ENCODE measurements at regions of chrX and their contacts with region 1.

Region 1: DNA sequence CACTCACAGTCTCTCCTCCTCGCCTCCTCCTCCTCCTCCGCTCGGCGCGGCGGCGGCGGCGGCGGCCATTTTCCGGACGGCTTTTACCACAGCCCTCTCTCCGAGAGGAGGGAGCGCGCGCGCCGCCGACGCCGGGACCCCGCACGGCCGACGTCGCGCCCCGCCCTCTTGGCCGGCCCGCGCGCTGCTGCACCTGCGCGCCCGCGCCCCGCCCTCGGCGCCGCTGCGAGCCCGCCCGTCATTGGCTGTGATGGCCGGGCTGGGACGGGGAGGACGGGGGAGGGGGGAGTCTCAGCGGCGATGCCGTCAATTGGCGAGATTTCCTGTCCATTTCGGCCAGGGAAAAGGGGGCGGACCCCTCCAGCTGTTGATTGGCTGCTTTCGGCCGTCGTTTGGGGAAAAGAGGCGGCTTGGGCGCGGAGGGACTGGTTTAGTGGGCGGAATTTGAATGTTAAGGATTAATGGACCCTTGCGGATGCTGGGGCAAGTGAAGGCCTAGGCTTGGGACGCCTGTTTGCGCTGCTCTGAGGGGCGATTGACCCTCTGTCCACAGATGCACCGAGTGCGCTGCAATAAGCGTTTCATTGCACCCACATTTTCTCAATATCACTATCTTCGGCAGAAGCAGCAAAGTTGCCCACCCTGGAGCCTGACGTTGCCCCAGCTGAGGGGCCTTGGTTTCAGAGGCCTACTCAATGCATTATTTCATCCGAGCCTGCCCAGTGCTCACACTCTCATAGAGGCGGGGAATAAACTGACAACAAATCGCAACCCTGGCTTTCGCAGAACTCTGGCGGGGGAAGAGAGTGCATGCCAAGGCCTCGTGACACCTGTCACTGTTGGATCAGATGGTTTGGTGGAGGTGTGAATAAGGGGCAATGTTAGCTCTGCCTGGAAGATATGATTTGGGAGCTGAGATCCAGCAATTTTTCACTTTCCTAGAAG is at the start of gene MECP2:
- DNase-seq: peak; percentile 93
- H3K4me3 Mint-ChIP-seq: peak within 1 kb of the TSS; percentile 98
- H3K27ac Mint-ChIP-seq: peak within 1 kb of the TSS; percentile 98
- H3K4me1 Mint-ChIP-seq: peaks cover 57% of the 10 kb centered on the region
- H3K27me3 Mint-ChIP-seq: no peaks in the 10 kb centered on the region
- total RNA-seq, gene MECP2: 50.8 to 51.0 TPM

Region 2: GRCh38 chrX:154056770-154057241 is 41.1 kb before region 1 on chrX:
- CTCF ChIA-PET with region 1: interaction called, 4 read pairs
- POLR2A ChIA-PET with region 1: no interaction called
- intact Hi-C with region 1: loop called (anchors 5 kb)
- DNase-seq: no peak
- H3K4me3 Mint-ChIP-seq: peak overlapping the region; percentile 13
- H3K27ac Mint-ChIP-seq: peak overlapping the region; percentile 76
- H3K4me1 Mint-ChIP-seq: peaks cover 61% of the 10 kb centered on the region
- H3K27me3 Mint-ChIP-seq: no peaks in the 10 kb centered on the region

Region 3: DNA sequence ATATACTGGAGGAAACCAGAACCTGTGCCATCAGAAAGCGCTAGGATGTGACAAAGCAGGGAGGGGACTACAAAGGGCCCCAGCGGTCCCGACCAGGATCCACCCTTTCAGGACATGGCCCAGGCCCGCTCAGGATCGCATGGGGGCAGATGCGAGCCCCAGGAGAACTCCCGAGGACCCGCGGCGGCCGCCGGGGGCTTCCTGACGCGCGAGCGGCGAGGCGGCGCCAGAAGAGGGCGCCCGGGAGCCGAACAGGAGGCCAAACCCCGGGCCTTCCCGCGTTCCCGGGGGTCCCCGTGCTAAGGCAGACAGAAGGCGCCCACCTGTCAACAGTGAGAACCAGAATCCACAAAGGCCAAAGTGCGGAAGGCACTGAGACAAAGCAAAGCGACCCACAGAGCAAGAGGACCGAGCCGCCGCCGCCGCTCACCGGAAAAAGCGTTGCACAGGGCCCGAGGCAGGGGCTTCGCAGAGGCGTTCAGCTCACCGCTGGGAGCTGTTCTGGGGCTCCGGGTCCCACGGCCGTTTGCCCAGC is 38.8 kb after region 1 on chrX:
- CTCF ChIA-PET with region 1: interaction called, 8 read pairs
- POLR2A ChIA-PET with region 1: interaction called, 4 read pairs
- intact Hi-C with region 1: loop called (anchors 1 kb)
- DNase-seq: peak; percentile 71
- H3K4me3 Mint-ChIP-seq: peak overlapping the region; percentile 70
- H3K27ac Mint-ChIP-seq: peak overlapping the region; percentile 79
- H3K4me1 Mint-ChIP-seq: peaks cover 21% of the 10 kb centered on the region
- H3K27me3 Mint-ChIP-seq: no peaks in the 10 kb centered on the region

Region 4: GRCh38 chrX:154378782-154379591 is 281.1 kb after region 1 on chrX and contains the start of gene EMD:
- CTCF ChIA-PET with region 1: interaction called, 3 read pairs
- POLR2A ChIA-PET with region 1: no interaction called
- intact Hi-C with region 1: loop called (anchors 5 kb)
- DNase-seq: peak; percentile 97
- H3K4me3 Mint-ChIP-seq: peak within 1 kb of the TSS; percentile 83
- H3K27ac Mint-ChIP-seq: peak within 1 kb of the TSS; percentile 87
- H3K4me1 Mint-ChIP-seq: peaks cover 24% of the 10 kb centered on the region
- H3K27me3 Mint-ChIP-seq: no peaks in the 10 kb centered on the region
- total RNA-seq, gene EMD: 75.8 to 79.1 TPM

Measured in activated CD4-positive, alpha-beta memory T cell treated with anti-CD3 and anti-CD28 coated beads for 36 hours (primary cell).